ENCODE measurements at regions of chr7 and their contacts with region 1.

Region 1: DNA sequence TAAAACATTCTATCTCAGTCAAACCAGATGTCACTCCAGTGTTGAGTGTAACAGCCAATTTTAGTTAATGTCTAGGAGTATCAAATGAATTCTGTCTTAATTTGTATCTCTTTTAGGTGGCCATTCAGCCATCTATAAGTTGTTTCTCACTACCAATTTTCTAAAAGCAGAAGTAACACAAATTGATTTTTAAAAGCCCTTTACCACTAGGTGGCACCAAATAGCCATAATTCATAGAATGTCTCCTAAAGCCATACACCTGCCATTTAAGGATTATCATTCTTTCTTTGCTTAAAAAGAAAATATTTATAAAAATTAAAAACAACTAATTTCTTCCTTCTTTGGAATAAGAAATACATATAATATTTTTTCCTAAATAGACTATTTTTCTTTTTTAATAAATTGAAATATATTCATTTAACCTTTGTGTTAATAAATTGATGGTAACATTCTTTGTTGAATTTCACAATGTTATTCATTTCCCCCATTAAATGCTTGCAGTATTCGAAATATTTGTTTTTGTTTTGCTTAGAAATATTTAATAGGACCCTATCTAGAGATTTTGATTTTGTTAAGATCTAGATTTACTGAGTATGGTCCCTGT is 107.8 kb upstream of the PPP1R3A start:
- DNase-seq: peak in 3 of 9 experiments; percentile 22 to 68 (median 62)
- ATAC-seq: peak; percentile 48
- H3K4me3 ChIP-seq: no peak overlapping the region
- H3K4me3 Mint-ChIP-seq: no peak overlapping the region
- H3K27ac ChIP-seq: no peak overlapping the region
- H3K27ac Mint-ChIP-seq: no peak overlapping the region
- H3K4me1 ChIP-seq: no peaks in the 10 kb centered on the region
- H3K4me1 Mint-ChIP-seq: no peaks in the 10 kb centered on the region
- H3K27me3 ChIP-seq: peaks cover 0 to 3% of the 10 kb centered on the region in 2 experiments
- H3K27me3 Mint-ChIP-seq: peaks cover 2% of the 10 kb centered on the region
- CTCF ChIP-seq: peak; percentile 84

Region 2: GRCh38 chr7:115707258-115708012 is 1680.8 kb after region 1 on chr7:
- CTCF ChIA-PET with region 1: no interaction called
- POLR2A ChIA-PET with region 1: no interaction called
- intact Hi-C with region 1: loop called in 1 of 2 experiments (anchors 10 kb)
- DNase-seq: peak in 2 of 9 experiments; percentile 2 to 4
- ATAC-seq: no peak
- H3K4me3 ChIP-seq: no peak overlapping the region
- H3K4me3 Mint-ChIP-seq: no peak overlapping the region
- H3K27ac ChIP-seq: no peak overlapping the region
- H3K27ac Mint-ChIP-seq: no peak overlapping the region
- H3K4me1 ChIP-seq: no peaks in the 10 kb centered on the region
- H3K4me1 Mint-ChIP-seq: no peaks in the 10 kb centered on the region
- H3K27me3 ChIP-seq: no peaks in the 10 kb centered on the region
- H3K27me3 Mint-ChIP-seq: no peaks in the 10 kb centered on the region
- CTCF ChIP-seq: no peak

Region 3: GRCh38 chr7:115851291-115851690 is 1824.7 kb after region 1 on chr7:
- CTCF ChIA-PET with region 1: interaction called, 3 read pairs
- POLR2A ChIA-PET with region 1: no interaction called
- intact Hi-C with region 1: loop called (anchors 2 to 5 kb)
- DNase-seq: peak in 2 of 9 experiments; percentile 31 to 34
- ATAC-seq: no peak
- H3K4me3 ChIP-seq: no peak overlapping the region
- H3K4me3 Mint-ChIP-seq: no peak overlapping the region
- H3K27ac ChIP-seq: no peak overlapping the region
- H3K27ac Mint-ChIP-seq: no peak overlapping the region
- H3K4me1 ChIP-seq: no peaks in the 10 kb centered on the region
- H3K4me1 Mint-ChIP-seq: no peaks in the 10 kb centered on the region
- H3K27me3 ChIP-seq: no peaks in the 10 kb centered on the region
- H3K27me3 Mint-ChIP-seq: no peaks in the 10 kb centered on the region
- CTCF ChIP-seq: no peak

Region 4: GRCh38 chr7:115910541-115911164 is 1884.1 kb after region 1 on chr7:
- CTCF ChIA-PET with region 1: no interaction called
- POLR2A ChIA-PET with region 1: no interaction called
- intact Hi-C with region 1: loop called (anchors 2 kb)
- DNase-seq: peak in 2 of 9 experiments; percentile 3 to 17
- ATAC-seq: no peak
- H3K4me3 ChIP-seq: no peak overlapping the region
- H3K4me3 Mint-ChIP-seq: no peak overlapping the region
- H3K27ac ChIP-seq: no peak overlapping the region
- H3K27ac Mint-ChIP-seq: no peak overlapping the region
- H3K4me1 ChIP-seq: no peaks in the 10 kb centered on the region
- H3K4me1 Mint-ChIP-seq: no peaks in the 10 kb centered on the region
- H3K27me3 ChIP-seq: no peaks in the 10 kb centered on the region
- H3K27me3 Mint-ChIP-seq: no peaks in the 10 kb centered on the region
- CTCF ChIP-seq: peak; percentile 35